ENCODE measurements at regions of chr1 and their contacts with region 1.

Region 1: GRCh38 chr1:56806804-56807203 is 12.4 kb downstream of the FYB2 start:
- DNase-seq: no peak
- ATAC-seq: no peak

Region 2: GRCh38 chr1:56795864-56796263 is 10.9 kb before region 1 on chr1:
- intact Hi-C with region 1: loop called (anchors 1 kb)
- DNase-seq: no peak
- ATAC-seq: no peak